Activated CD8-positive, alpha-beta memory T cell treated with anti-CD3 and anti-CD28 coated beads, Interleukin-2, amount 10 ng/mL, durations not matched to agents 7 days and 5 days (primary cell): ENCODE measurements at regions of chr19 and their contacts with region 1.

Region 1: GRCh38 chr19:17405250-17406038 is at the start of gene BST2:
- DNase-seq: peak; percentile 85
- ATAC-seq: peak; percentile 88
- H3K4me3 Mint-ChIP-seq: peak within 1 kb of the TSS; percentile 94
- H3K27ac Mint-ChIP-seq: peak within 1 kb of the TSS; percentile 97
- H3K4me1 Mint-ChIP-seq: peaks cover 32% of the 10 kb centered on the region
- H3K27me3 Mint-ChIP-seq: no peaks in the 10 kb centered on the region
- total RNA-seq, gene BST2: 298 to 361 TPM

Region 2: DNA sequence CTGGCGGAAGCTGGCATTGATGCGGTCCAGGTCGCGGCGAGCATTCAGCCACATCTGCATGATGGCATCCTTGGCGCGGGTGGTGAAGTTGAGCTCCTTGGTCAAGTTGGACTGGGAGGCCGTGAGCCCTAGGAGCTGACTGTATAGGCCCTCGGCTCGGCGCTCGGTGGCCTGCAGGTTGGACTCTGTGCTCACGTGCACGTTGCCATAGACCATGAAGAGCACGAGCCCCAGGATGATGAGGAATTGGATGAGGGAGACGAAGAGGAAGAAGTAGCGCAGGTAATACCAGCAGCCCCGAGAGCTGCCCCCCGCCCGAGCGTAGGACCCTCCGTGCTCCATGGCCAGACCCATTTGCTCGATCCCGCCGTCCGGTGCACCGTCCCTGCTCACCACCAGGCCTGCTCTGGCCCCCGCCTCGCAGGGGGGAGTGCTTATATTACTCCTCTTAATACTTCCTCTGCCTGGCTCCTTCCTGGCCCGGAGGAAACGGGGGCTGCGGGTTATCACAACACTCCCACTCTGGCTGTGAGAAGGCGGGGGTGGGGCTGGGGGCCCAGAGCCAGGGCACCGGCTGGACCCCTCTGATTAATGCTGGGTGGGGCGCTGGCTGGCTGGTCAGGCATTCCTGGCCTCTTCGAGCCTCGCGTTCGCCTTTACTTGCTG is 28.4 kb before region 1 on chr19 and contains the start of gene PLVAP:
- CTCF ChIA-PET with region 1: no interaction called
- DNase-seq: no peak
- ATAC-seq: no peak
- H3K4me3 Mint-ChIP-seq: no peak within 1 kb of the TSS
- H3K27ac Mint-ChIP-seq: no peak within 1 kb of the TSS
- H3K4me1 Mint-ChIP-seq: peaks cover 2% of the 10 kb centered on the region
- H3K27me3 Mint-ChIP-seq: peaks cover 8% of the 10 kb centered on the region
- total RNA-seq, gene PLVAP: not detected

Region 3: DNA sequence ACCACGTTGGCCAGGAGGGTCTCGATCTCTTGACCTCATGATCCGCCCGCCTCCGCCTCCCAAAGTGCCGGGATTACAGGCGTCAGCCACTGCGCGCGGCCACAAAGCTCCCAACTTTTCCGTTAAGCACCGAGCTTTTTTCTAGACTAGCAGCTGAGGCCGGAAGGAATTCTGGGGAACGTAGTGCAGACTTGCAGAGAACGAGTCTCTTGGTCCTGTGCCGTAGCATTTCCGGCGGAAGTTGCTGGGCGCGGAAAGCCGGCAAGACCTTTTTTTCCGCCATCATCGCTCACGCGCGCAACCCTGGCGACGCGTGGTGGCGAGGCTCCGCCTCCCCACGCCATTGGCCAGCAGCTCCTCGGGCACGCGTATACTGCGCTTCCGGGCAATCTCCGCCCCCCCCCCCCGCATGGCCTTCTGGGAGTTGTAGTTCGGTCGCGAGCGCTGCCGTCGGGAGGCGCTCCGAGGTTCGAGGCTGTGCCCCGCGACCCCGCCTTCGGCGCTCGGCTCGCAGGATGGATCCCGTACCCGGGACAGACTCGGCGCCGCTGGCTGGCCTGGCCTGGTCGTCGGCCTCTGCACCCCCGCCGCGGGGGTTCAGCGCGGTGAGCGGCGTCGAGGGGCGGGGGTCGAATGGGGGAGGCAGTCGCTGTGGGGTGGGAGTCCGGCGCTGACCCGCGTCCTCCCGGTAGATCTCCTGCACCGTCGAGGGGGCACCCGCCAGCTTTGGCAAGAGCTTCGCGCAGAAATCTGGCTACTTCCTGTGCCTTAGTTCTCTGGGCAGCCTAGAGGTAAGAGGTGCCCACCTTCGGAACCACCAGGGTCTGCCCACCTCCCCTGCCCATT is 14.4 kb after region 1 on chr19 and contains the start of gene MVB12A:
- CTCF ChIA-PET with region 1: interaction called, 11 read pairs
- DNase-seq: peak; percentile 97
- ATAC-seq: peak; percentile 95
- H3K4me3 Mint-ChIP-seq: peak within 1 kb of the TSS; percentile 87
- H3K27ac Mint-ChIP-seq: peak within 1 kb of the TSS; percentile 93
- H3K4me1 Mint-ChIP-seq: peaks cover 21% of the 10 kb centered on the region
- H3K27me3 Mint-ChIP-seq: no peaks in the 10 kb centered on the region
- total RNA-seq, gene MVB12A: 40.4 to 51.1 TPM

Region 4: DNA sequence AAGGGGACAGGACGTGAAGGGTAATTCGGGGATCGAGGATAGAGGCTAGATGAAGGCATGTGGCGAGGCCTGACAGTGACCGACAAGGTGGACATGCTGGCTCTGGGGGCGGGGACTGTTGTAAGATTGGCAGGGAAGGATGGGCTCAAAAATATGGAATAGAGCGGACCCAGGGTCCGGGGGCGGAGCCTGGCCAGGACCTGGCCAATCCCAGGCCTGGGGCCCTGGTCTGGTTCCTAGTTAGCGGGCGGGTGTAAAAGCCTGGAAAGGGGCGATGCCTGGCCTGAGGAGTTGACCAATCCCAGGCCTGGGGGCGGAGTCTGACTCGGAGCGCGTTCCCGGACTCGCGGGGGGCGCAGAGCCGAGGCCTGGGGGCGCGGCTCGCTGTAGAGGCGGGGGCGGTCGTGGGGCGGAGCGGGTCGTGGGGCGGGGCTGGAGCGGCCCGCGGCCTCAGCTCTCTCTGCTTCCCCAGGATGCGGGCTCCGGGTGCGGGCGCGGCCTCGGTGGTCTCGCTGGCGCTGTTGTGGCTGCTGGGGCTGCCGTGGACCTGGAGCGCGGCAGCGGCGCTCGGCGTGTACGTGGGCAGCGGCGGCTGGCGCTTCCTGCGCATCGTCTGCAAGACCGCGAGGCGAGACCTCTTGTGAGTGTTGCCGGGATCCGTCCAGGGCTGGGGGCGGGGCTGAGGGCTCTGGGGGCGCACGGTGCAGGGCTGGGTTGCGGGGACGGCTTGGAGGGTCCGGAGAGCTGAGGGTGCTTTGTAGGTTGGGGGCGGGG is 64.8 kb after region 1 on chr19 and contains the start of gene SLC27A1:
- CTCF ChIA-PET with region 1: interaction called, 10 read pairs
- DNase-seq: peak; percentile 94
- ATAC-seq: peak; percentile 90
- H3K4me3 Mint-ChIP-seq: peak within 1 kb of the TSS; percentile 90
- H3K27ac Mint-ChIP-seq: peak within 1 kb of the TSS; percentile 88
- H3K4me1 Mint-ChIP-seq: peaks cover 29% of the 10 kb centered on the region
- H3K27me3 Mint-ChIP-seq: peaks cover 11% of the 10 kb centered on the region
- total RNA-seq, gene SLC27A1: 1.5 to 2.1 TPM

Region 5: GRCh38 chr19:17590877-17591276 is 185.4 kb after region 1 on chr19:
- CTCF ChIA-PET with region 1: no interaction called
- DNase-seq: no peak
- ATAC-seq: peak; percentile 42
- H3K4me3 Mint-ChIP-seq: no peak overlapping the region
- H3K27ac Mint-ChIP-seq: no peak overlapping the region
- H3K4me1 Mint-ChIP-seq: peaks cover 7% of the 10 kb centered on the region
- H3K27me3 Mint-ChIP-seq: peaks cover 19% of the 10 kb centered on the region